HepG2 (cell line): ENCODE measurements at regions of chr1 and their contacts with region 1.

Region 1: DNA sequence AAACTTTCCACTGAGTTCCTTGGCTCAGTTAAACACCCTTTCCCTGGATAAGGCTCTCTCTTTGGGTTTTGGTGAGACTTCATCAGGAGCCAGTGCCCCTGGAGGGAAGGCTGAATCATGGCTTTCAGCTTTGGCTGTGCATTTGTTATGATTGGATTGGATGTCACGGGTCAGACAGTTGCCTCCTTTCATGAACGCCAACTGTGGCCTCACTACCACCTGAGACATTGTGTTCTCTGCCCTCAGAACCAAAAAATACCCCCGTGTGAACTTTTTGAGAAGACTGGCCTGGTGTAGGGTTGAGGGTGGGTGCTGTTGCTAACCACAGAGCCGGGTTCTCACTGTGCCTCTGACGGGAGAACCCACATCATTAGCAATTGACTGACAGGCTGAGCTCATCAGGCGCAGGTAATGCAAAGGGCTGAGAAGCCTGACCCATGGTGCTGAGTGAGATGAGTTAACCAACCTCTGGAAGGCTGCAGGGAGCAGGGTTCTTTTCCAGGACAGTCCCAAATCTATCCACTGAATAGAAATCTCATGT is 65.6 kb downstream of the HHAT start:
- DNase-seq: no peak
- ATAC-seq: no peak
- H3K4me3 ChIP-seq: no peak overlapping the region
- H3K27ac ChIP-seq: no peak overlapping the region
- H3K4me1 ChIP-seq: peaks cover 29% of the 10 kb centered on the region
- H3K27me3 ChIP-seq: no peaks in the 10 kb centered on the region
- CTCF ChIP-seq: no peak
- EP300 ChIP-seq: no peak
- POLR2A ChIP-seq: no peak
- RAD21 ChIP-seq: no peak

Region 2: DNA sequence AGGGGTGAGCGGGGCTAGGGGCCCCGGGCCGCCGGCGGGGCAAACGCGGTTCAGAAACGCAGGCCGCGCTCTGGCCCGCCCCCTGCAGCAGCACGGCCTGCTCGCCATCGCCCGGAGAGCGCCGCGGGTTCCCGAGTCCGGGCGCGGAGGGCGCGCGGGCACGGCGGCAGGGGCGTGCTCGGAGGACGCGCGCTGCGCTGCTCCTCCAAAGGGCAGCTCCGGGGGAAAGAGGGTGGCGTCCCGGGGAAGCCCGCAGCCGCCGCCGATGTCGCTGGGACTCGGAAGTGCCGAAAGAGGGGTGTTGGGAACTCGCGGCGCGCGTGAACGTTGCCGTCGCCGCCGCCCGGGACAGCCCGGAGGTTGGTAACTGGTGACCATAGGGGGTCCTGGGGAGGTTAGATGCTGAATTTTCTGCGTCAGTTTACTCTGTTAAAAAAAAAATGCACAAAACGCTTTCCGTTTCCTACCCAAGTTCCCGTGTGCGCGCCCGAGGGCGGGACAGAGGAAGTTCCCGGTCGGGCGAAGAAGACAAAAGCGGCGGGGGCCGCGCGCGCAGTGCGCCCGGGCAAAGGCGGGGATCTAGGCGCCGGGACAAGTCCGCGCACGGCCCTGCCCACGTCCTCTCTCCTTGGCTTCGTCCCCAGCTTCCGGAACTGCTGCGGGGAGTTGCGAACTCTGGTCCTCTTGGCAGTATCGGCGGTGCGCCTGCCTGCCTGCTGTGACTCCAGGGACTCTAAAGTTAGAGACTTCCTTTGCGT is 65.4 kb before region 1 on chr1 and contains the start of gene HHAT:
- CTCF ChIA-PET with region 1: no interaction called
- POLR2A ChIA-PET with region 1: no interaction called
- in situ Hi-C with region 1: no loop called
- intact Hi-C with region 1: loop called (anchors 2 kb)
- DNase-seq: peak; percentile 49
- ATAC-seq: peak; percentile 94
- H3K4me3 ChIP-seq: peak within 1 kb of the TSS; percentile 69 to 85 (median 73)
- H3K27ac ChIP-seq: peak within 1 kb of the TSS; percentile 73
- H3K4me1 ChIP-seq: peaks cover 19% of the 10 kb centered on the region
- H3K27me3 ChIP-seq: no peaks in the 10 kb centered on the region; a peak in 1 of 5 replicates
- CTCF ChIP-seq: peak; percentile 26; the same call in 1 of the 2 replicates
- EP300 ChIP-seq: no peak
- POLR2A ChIP-seq: peak; percentile 61 to 67
- RAD21 ChIP-seq: no peak
- total RNA-seq, gene HHAT: 2.9 and 4.9 TPM in 2 replicates